HEK293 (cell line): ENCODE measurements at regions of chr1 and their contacts with region 1.

Region 1: DNA sequence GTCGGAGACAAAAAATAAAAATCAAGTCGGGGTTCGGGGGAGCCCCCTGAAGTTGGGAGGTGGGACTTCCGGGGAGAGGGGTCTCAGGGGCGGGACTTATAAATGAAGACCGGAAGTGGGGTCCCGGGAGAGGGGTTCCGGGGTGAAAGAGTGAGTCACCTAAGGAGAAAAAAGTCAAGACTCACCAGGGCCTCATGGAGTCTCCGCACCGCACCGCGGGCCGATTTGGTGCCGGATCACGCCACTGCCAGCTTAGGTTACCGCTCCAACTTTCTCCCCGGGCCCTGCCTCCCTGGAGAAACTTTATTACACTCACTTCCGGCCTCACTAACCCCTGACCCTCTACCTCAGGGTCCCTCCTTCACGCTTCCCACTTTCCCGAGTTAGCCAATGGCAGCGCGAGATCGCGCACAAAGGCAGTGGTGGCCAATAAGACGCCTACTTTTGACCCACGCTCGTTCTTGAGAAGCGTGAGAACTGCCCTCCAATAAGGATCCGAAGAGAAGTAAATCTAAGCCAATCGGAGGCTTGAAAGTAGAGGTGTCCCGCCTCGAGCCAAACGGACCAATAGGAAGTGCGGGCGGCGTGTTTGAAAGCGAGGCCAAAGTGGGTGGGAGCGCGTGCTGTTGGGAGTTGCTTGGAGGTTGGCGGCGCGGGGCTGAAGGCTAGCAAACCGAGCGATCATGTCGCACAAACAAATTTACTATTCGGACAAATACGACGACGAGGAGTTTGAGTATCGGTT is at the start of gene CKS1B:
- H3K4me3 ChIP-seq: peak within 1 kb of the TSS; percentile 68
- H3K27ac ChIP-seq: peak within 1 kb of the TSS; percentile 76
- H3K4me1 ChIP-seq: peaks cover 12% of the 10 kb centered on the region
- CTCF ChIP-seq: no peak

Region 2: DNA sequence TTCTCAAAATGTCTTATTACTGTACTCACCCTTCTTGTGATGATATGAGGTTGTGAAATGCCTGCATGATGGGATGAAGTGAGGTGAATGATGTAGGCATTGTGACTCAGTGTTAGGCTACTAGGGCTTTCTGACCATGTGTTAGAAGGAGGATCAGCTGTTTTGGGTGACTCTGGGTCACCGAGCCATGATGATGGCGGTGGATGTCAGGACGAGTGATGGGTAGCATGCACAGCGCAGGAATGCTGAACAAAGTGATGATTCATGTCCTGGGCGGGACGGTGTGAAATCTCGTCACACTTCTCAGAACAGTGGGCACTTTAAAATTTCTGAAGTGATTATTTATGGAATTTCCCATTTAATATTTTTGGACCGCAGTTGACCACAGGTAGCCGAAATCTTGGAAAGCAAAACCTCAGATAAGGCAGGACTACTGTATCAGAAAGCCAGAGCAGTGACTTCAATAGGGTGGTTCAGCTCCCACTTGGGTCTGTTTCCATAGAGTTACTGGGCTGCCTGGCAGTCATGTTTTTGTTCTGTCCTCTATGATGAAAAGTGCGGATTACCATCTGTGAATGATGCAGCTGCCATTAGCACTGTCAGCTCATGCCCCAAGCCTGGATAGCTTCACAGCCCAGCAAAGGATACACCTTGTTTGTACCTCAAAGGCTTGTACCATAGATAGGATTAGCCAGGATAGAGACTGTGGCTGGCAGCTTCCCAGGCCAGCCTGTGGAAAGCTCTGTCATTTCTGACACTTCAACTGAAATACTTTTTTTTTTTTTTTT is 542.5 kb before region 1 on chr1:
- CTCF ChIA-PET with region 1: no interaction called
- POLR2A ChIA-PET with region 1: no interaction called
- H3K4me3 ChIP-seq: no peak overlapping the region
- H3K27ac ChIP-seq: no peak overlapping the region
- H3K4me1 ChIP-seq: no peaks in the 10 kb centered on the region
- CTCF ChIP-seq: no peak

Region 3: GRCh38 chr1:154453574-154454352 is 520.5 kb before region 1 on chr1:
- CTCF ChIA-PET with region 1: no interaction called
- POLR2A ChIA-PET with region 1: no interaction called
- H3K4me3 ChIP-seq: no peak overlapping the region
- H3K27ac ChIP-seq: no peak overlapping the region
- H3K4me1 ChIP-seq: no peaks in the 10 kb centered on the region; the same call in 1 of the 2 replicates
- CTCF ChIP-seq: no peak

Region 4: GRCh38 chr1:154955718-154956543 is 18.3 kb before region 1 on chr1 and contains the start of gene PBXIP1:
- CTCF ChIA-PET with region 1: interaction called, 16 read pairs
- POLR2A ChIA-PET with region 1: interaction called, 69 read pairs
- H3K4me3 ChIP-seq: peak within 1 kb of the TSS; percentile 59
- H3K27ac ChIP-seq: no peak within 1 kb of the TSS
- H3K4me1 ChIP-seq: peaks cover 5% of the 10 kb centered on the region; the same call in 1 of the 2 replicates
- CTCF ChIP-seq: peak; percentile 20; the same call in 1 of the 2 replicates

Region 5: GRCh38 chr1:154961497-154962262 is 12.6 kb before region 1 on chr1 and contains the start of gene PYGO2:
- CTCF ChIA-PET with region 1: interaction called, 16 read pairs
- POLR2A ChIA-PET with region 1: interaction called, 69 read pairs
- H3K4me3 ChIP-seq: peak within 1 kb of the TSS; percentile 90
- H3K27ac ChIP-seq: peak within 1 kb of the TSS; percentile 94
- H3K4me1 ChIP-seq: peaks cover 8% of the 10 kb centered on the region
- CTCF ChIP-seq: peak; percentile 87; the same call in 1 of the 2 replicates

Region 6: DNA sequence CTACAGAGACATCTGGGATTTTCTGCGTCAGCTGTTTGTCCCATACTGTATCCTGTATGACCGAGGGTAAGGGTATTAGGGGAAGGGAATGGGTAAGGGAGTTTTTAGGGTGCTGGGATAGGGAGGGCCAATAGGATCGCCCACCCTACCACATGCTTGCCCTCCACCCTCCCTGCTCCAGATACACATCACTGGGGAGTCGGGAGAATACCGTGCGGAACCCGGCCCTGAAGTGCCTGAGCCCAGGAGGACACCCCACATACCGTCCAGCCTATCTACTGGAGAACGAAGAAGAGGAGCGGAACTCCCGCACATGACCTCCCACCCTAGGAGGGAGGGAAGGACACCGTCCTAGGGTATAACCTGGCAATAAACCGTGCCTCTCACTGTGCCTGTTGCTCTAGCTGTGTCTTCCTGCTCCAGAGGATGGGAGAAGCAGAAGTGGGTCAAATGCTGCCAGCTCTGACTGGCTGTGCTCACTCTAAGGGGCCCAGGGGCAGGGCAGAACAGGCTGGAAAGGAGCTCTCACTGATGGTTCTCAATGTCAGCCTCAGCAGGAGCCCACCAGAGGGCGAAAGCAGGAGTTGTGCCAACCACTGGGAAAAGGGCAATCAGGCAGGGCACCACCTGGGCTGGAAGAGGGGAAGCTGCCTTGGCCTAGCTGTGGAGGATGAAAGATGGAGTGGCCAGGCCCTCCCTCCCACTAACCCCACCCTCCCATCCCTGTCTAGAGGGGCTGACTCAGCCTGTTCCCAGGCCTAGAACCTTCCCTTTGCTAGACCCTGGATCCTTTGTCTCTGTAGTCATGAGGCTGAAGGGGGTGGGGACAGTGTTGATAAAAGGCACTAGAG is 18.7 kb after region 1 on chr1:
- CTCF ChIA-PET with region 1: interaction called, 16 read pairs
- POLR2A ChIA-PET with region 1: interaction called, 9 read pairs
- H3K4me3 ChIP-seq: no peak overlapping the region
- H3K27ac ChIP-seq: no peak overlapping the region
- H3K4me1 ChIP-seq: no peaks in the 10 kb centered on the region
- CTCF ChIP-seq: peak; percentile 71

Region 7: DNA sequence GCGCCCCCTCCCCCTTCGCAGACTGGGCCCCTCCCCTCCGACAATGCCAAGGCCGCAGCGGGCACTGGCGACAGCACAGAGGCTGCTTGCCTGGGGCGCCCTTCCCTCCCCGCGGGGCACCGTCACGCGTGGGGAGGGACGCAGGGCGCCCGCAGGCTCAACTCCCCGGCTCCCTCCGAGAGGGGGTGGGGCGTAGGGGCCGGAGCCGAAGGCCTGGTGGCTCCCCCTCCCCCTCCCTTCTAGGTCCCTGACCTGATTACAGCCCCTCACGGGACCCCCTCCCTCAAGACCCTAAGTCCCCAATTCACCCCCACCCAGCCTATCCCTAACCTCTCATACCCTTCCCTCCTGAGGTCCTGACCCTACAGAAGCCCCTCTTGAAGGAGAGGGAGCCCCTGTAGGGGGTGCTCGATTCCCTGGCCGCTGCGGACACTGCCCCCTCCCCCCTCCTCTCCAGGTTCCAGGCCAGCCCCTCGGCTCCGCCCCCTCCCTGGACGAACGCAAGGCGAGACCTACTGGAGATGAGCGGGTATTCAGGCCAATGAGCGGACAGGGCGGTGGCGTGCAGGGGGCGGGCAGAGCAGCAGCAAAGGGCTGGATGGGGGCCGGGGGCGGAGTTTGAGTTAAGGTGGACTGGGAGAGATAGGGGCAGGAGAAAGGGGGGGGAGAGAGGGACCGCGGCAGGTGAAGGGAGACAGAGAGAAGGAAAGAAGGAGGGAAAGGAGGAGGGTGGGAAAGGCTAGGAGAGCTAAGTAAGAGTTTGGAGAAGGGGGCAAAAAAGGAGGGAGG is 27.6 kb after region 1 on chr1:
- CTCF ChIA-PET with region 1: interaction called, 16 read pairs
- POLR2A ChIA-PET with region 1: interaction called, 14 read pairs
- H3K4me3 ChIP-seq: peak overlapping the region; percentile 50
- H3K27ac ChIP-seq: peak overlapping the region; percentile 83; the same call in 1 of the 2 replicates
- H3K4me1 ChIP-seq: peaks cover 13% of the 10 kb centered on the region
- CTCF ChIP-seq: peak; percentile 95

Region 8: GRCh38 chr1:155050560-155051341 is 76.5 kb after region 1 on chr1 and contains the start of gene ADAM15:
- CTCF ChIA-PET with region 1: interaction called, 4 read pairs
- POLR2A ChIA-PET with region 1: interaction called, 10 read pairs
- H3K4me3 ChIP-seq: peak within 1 kb of the TSS; percentile 66
- H3K27ac ChIP-seq: peak within 1 kb of the TSS; percentile 78; the same call in 1 of the 2 replicates
- H3K4me1 ChIP-seq: peaks cover 9% of the 10 kb centered on the region
- CTCF ChIP-seq: peak; percentile 99

Region 9: DNA sequence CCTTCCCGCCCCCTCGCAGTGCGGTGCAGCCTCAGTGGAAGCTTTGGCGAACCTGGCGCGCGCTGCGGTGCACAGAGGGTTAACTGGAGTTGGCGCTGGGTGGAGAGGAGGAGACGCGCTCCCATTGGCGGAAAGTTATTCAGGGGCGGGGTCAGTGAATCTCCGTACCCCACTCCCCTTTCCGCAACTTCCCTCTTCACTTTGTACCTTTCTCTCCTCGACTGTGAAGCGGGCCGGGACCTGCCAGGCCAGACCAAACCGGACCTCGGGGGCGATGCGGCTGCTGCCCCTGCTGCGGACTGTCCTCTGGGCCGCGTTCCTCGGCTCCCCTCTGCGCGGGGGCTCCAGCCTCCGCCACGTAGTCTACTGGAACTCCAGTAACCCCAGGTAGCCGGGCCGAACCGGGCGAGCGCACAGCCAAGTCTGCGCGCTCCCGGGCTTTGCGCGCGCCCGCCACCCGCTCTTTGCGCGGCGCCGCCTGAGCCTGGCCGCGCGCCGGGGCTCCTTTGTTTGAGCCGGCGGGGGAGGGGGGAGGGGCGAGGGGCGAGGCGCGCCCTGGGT is 89.4 kb after region 1 on chr1 and contains the start of gene EFNA4:
- CTCF ChIA-PET with region 1: interaction called, 10 read pairs
- POLR2A ChIA-PET with region 1: no interaction called
- H3K4me3 ChIP-seq: peak within 1 kb of the TSS; percentile 88
- H3K27ac ChIP-seq: peak within 1 kb of the TSS; percentile 64; the same call in 1 of the 2 replicates
- H3K4me1 ChIP-seq: no peaks in the 10 kb centered on the region; the same call in none of the 2 replicates
- CTCF ChIP-seq: no peak